GM10248 (cell line): ENCODE measurements at regions of chr14 and their contacts with region 1.

Region 1: GRCh38 chr14:91891721-91892220 is 24.4 kb upstream of the TC2N start:
- DNase-seq: no peak
- CTCF ChIP-seq: no peak

Region 2: GRCh38 chr14:92544051-92544750 is 652.4 kb after region 1 on chr14:
- CTCF ChIA-PET with region 1: no interaction called
- POLR2A ChIA-PET with region 1: interaction called, 10 read pairs
- DNase-seq: no peak
- CTCF ChIP-seq: no peak